ENCODE measurements at regions of chr1 and their contacts with region 1.

Region 1: DNA sequence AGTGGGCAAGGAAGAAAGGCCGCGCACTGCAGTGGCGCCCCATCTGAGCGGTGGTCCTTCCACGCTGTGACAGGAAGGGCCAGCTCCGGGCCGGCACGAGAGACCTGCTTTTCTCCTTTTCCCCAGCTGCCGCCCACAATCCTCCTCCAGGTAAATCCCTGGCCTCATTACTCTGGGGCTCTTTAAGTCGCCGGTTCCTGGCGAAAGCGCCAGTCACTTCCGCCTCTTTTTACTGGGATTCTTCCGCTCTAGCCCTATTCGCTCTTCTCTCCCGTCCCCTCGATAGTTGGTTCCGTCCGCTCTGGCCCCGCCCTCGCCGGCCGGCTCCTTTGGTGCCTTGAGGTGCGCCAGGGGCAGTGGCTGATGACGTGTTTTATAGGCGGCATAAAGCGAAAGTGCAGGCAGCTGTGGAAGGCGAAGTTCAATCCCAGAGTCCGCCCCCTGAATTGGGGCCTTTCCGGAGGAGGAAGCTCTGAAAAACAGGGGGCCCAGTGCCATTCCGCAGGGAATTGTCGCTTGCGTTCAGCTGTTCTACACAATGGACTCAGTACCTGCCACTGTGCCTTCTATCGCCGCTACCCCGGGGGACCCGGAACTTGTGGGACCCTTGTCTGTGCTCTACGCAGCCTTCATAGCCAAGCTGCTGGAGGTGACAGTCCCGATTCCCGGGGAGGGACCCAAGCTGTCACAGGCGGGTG is 26.2 kb downstream of the MIA3 start:
- DNase-seq: peak; percentile 91 to 99 (median 96)
- ATAC-seq: peak; percentile 83
- H3K4me3 ChIP-seq: peak overlapping the region; percentile 73
- H3K4me3 Mint-ChIP-seq: peak overlapping the region; percentile 94
- H3K27ac ChIP-seq: peak overlapping the region; percentile 95 to 97
- H3K27ac Mint-ChIP-seq: peak overlapping the region; percentile 99
- H3K4me1 ChIP-seq: peaks cover 20% of the 10 kb centered on the region
- H3K4me1 Mint-ChIP-seq: peaks cover 44% of the 10 kb centered on the region
- H3K27me3 ChIP-seq: no peaks in the 10 kb centered on the region
- H3K27me3 Mint-ChIP-seq: no peaks in the 10 kb centered on the region
- CTCF ChIP-seq: no peak

Region 2: DNA sequence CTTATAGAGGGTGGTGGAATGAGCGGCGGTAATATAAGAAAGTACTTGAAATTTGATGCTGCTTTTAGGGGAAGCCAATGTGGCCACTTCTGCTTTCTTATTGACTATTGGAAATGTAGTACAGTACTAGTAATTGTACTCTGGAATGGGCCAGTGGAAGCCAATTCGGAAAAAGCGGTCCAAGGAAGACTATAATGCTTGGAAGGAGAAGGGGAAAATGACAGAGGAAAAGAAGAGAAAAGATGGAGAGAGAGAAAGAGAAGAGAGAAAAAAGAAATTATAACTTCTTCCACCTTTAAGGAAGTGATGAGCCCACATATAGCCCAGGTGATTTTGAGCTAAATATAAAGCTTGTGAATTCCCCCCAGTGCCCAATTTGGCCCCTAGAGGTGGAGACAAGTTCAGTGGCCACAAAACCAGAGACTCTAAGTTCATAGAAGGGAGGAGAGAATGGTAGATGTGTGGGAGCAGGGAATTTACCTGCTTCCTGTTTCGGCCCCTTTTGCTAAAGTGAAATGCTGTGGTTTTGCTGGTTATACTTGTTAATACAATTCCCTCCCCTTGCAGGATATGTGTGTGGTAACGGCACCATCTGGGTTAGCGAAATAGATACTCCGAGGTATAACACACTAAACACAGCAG is 866.5 kb before region 1 on chr1:
- CTCF ChIA-PET with region 1: no interaction called
- POLR2A ChIA-PET with region 1: no interaction called
- intact Hi-C with region 1: no loop called
- DNase-seq: peak in 6 of 14 experiments; percentile 16 to 89 (median 52)
- ATAC-seq: peak; percentile 76
- H3K4me3 ChIP-seq: no peak overlapping the region
- H3K4me3 Mint-ChIP-seq: peak overlapping the region; percentile 47
- H3K27ac ChIP-seq: peak overlapping the region; percentile 43 to 59
- H3K27ac Mint-ChIP-seq: peak overlapping the region; percentile 88
- H3K4me1 ChIP-seq: peaks cover 54% of the 10 kb centered on the region
- H3K4me1 Mint-ChIP-seq: peaks cover 57% of the 10 kb centered on the region
- H3K27me3 ChIP-seq: no peaks in the 10 kb centered on the region
- H3K27me3 Mint-ChIP-seq: no peaks in the 10 kb centered on the region
- CTCF ChIP-seq: no peak

Region 3: GRCh38 chr1:222589462-222590302 is 54.4 kb before region 1 on chr1 and contains the start of gene TAF1A:
- CTCF ChIA-PET with region 1: no interaction called
- POLR2A ChIA-PET with region 1: interaction called, 33 read pairs
- intact Hi-C with region 1: loop called (anchors 2 to 5 kb)
- DNase-seq: peak; percentile 74 to 93 (median 82)
- ATAC-seq: peak; percentile 99
- H3K4me3 ChIP-seq: peak within 1 kb of the TSS; percentile 74
- H3K4me3 Mint-ChIP-seq: peak within 1 kb of the TSS; percentile 97
- H3K27ac ChIP-seq: peak within 1 kb of the TSS; percentile 67 to 76
- H3K27ac Mint-ChIP-seq: peak within 1 kb of the TSS; percentile 99
- H3K4me1 ChIP-seq: peaks cover 14% of the 10 kb centered on the region
- H3K4me1 Mint-ChIP-seq: peaks cover 55% of the 10 kb centered on the region
- H3K27me3 ChIP-seq: no peaks in the 10 kb centered on the region
- H3K27me3 Mint-ChIP-seq: no peaks in the 10 kb centered on the region
- CTCF ChIP-seq: no peak
- total RNA-seq, gene TAF1A: 3.3 to 4.1 TPM

Region 4: DNA sequence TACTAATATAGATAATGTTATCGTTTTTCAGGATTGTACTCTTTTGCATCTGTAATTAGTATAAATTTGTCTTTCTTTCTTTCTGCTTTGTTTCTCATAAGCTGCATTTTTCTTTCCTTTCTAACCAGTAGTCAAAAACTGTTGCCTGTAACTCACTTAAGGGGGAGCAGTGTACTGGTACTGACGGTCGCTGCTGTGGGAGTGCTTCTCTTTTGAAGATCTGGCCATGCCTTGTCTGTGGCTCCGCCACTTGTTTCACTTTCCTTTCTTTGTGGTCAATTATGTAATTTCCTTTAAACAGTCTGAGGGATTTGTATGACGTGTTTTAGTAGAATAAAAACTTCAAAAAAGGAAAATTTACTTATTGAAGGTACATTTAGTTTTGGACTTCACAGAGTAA is 10.8 kb after region 1 on chr1:
- CTCF ChIA-PET with region 1: interaction called, 20 read pairs
- POLR2A ChIA-PET with region 1: interaction called, 38 read pairs
- intact Hi-C with region 1: loop called in 1 of 2 experiments (anchors 1 kb)
- DNase-seq: peak; percentile 50 to 95 (median 64)
- ATAC-seq: peak; percentile 98
- H3K4me3 ChIP-seq: no peak overlapping the region
- H3K4me3 Mint-ChIP-seq: peak overlapping the region; percentile 49
- H3K27ac ChIP-seq: peak overlapping the region; percentile 77 to 90
- H3K27ac Mint-ChIP-seq: peak overlapping the region; percentile 87
- H3K4me1 ChIP-seq: peaks cover 25% of the 10 kb centered on the region
- H3K4me1 Mint-ChIP-seq: peaks cover 54% of the 10 kb centered on the region
- H3K27me3 ChIP-seq: no peaks in the 10 kb centered on the region
- H3K27me3 Mint-ChIP-seq: no peaks in the 10 kb centered on the region
- CTCF ChIP-seq: peak; percentile 45

Measured in CD4-positive, alpha-beta T cell (primary cell).